Dorsolateral prefrontal cortex (tissue), 120 donors: ENCODE measurements at regions of chr3 and their contacts with region 1.

Region 1: DNA sequence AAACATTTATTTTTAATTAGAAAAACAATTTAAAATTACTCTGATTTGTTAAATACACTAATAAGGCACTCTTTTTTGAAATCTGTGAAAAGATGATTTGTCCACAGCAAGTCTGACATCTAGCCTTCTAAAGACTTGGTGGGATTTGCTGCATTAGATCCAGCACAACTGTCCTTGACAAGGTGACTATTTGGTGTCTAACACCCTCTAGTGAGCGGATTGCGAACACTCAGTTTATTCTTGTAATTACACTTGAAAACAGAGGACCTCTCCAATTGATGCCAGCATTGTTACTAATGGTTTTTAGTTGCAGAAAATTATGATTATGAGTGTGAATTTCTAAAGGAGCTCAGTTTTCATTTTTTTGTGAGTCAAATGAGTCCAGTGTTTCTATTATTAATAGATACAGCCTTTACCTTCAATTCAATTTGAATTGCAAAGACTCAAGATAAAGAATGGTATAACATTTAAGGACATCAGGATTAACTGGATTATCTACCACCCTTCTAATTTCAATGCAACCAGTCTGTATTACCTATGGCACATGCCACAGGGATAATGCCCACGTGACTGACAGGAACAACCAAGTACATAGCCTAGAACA is 29.7 kb upstream of the STRIT1 start:
- DNase-seq: peak in 2 of 10 donors; percentile 31 to 34
- H3K4me3 ChIP-seq: no peak overlapping the region
- H3K27ac ChIP-seq: no peak overlapping the region
- H3K27me3 ChIP-seq: no peaks in the 10 kb centered on the region
- CTCF ChIP-seq: peak; percentile 26 to 81 (median 57)

Region 2: DNA sequence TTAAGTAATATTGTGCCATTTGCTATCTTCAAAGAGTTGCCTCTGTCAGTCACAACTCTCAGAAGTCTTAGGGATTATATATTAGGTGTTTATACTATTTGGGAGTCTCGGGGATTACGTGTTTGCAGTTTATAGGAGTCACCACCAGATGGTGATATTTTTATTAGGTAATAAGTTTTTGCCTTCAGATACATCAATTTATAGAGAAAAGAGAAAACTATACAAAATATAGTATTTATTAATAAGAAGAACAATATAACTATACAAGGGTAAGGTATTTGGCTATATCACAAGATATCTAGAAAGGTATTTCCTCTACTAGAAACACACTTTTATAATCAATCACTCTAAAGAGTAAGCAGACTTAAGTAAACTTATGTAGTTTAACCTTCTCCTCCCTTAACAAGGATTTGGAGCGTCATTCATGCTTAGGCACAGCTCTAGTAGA is 988.2 kb before region 1 on chr3:
- intact Hi-C with region 1: loop called in 1 of 2 experiments (anchors 5 kb)
- DNase-seq: no peak
- H3K4me3 ChIP-seq: no peak overlapping the region
- H3K27ac ChIP-seq: no peak overlapping the region
- H3K27me3 ChIP-seq: peaks cover 0 to 7% (median 0%) of the 10 kb centered on the region in 45 donors
- CTCF ChIP-seq: peak; percentile 41 to 78 (median 67)

Region 3: GRCh38 chr3:154758109-154758868 is 564.9 kb before region 1 on chr3:
- intact Hi-C with region 1: loop called (anchors 5 to 10 kb)
- DNase-seq: no peak
- H3K4me3 ChIP-seq: no peak overlapping the region
- H3K27ac ChIP-seq: no peak overlapping the region
- H3K27me3 ChIP-seq: no peaks in the 10 kb centered on the region
- CTCF ChIP-seq: peak in 55 of 56 donors; percentile 29 to 71 (median 52)

Region 4: DNA sequence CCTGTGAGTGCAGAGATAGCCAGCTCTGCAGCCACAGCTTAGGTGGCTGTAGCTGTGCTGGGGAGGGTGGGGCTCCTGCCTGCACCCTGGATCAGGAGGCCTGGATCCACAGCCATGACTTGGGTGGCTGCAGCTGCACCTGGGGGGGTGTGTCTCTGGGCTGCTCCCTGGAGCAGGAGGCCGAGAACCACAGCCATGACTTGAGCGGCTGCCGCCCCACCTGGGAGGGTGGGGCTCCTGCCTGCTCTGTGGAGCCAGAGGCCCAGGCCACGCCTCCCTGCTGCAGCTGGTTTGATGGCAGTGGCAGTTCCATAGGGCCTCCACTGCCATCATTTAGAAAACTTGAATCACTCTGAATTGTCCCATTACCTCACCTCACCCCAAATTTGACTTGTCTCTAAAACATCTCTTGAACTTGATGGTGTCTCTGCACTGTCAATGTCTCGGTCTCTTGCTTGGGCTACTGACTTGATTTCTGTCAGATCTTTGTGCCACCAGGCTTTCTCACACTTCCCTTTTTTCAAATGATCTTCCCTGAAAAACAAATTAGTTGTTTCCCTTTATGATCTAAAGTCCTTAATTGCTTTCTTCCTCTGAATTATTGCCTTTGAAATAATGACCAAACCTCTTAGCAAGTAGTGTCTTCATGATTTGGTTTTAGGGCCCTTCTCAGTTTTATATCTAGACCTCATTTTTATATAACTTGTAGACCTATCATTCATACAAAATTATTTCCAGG is 556.2 kb before region 1 on chr3:
- intact Hi-C with region 1: loop called in 1 of 2 experiments (anchors 10 kb)
- DNase-seq: no peak
- H3K4me3 ChIP-seq: no peak overlapping the region
- H3K27ac ChIP-seq: no peak overlapping the region
- H3K27me3 ChIP-seq: no peaks in the 10 kb centered on the region
- CTCF ChIP-seq: no peak

Region 5: DNA sequence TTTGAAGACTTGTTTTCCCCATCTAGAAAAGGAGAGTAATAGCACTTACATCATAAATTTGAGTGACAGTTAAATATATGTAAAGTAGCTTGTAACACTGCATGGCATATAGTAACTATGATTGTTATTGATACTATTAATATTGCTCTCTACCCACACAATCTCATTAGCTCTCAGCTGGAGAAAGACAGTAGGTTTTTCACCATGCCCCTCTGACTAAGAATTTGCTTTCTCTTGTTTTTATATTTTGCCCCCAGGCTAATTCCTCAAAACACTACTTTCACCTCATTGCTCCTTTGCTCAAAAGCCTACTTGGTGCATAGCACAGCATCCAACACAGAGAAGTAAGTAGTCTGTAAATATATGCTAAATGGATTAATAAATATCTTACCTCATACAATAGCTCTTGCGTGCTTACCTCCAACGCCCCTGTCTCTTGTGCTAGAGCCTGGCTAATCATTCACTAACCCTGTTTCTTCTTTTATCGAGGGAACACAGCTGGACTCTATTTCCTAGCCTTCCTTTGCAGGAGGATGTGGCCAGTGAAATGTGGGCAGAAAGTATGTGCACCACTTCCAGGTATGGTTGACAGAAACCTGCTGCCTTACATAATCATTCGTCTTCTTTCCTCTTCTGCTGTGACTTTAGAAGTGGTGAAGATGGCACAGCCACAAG is 231.7 kb after region 1 on chr3:
- intact Hi-C with region 1: no loop called
- DNase-seq: no peak
- H3K4me3 ChIP-seq: no peak overlapping the region
- H3K27ac ChIP-seq: no peak overlapping the region
- H3K27me3 ChIP-seq: no peaks in the 10 kb centered on the region
- CTCF ChIP-seq: no peak